OCI-LY7 (cell line): ENCODE measurements at regions of chr16 and their contacts with region 1.

Region 1: DNA sequence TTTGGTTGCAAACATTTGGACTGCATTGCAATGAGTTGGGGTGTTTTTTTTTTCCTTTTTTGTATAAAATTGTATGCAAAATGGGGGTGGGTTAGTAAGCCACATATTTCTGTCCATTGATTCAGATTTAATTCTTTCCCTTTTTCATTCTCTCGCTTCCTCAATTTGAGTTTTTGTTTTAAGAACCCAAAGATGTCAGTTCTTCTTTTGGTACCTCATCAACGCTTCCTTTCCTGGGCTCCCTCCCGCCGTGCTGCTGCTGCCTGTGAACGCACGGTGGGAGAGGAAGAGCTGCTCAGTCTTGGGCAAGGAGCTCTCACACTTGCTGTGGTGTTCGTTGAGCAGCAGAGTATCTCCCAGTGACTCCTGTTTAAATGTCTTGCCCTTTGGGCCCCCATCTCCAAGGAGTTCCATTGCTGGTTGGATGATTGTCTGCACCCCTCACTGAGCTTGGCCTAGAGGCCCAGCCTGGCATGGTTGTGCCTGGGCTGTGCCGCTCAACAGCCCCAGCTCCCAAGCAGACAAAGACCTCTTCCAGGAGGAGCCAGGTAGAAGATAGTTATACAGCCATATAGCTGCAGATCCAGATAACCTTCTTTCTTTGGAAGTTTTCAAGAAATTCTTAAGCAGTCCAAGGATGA is 13.6 kb downstream of the UBFD1 start:
- DNase-seq: peak; percentile 82
- H3K4me3 ChIP-seq: peak overlapping the region; percentile 44
- H3K27ac ChIP-seq: peak overlapping the region; percentile 79
- H3K4me1 ChIP-seq: peaks cover 36% of the 10 kb centered on the region
- CTCF ChIP-seq: no peak

Region 2: DNA sequence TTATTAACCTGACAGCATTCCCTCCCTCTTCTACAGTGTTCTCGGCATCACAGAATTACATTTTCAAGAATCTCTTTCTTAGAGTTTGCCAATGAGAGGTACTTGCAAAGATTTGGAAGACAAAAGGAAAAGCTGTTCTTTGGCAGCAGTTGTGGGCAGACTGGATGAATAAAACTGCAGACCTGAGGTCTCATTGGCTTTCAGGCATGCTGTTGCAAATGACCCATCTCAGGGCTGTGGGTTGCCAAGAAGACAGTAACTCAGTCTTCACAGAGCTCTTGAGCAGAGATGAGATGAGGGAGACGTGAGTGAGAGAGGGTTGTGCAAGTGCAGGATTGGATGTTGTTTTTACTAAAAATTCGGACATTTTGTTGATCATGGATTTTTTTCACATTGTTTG is 410.5 kb before region 1 on chr16:
- CTCF ChIA-PET with region 1: no interaction called
- POLR2A ChIA-PET with region 1: no interaction called
- intact Hi-C with region 1: no loop called
- DNase-seq: no peak
- H3K4me3 ChIP-seq: no peak overlapping the region
- H3K27ac ChIP-seq: no peak overlapping the region
- H3K4me1 ChIP-seq: peaks cover 21% of the 10 kb centered on the region
- CTCF ChIP-seq: no peak

Region 3: GRCh38 chr16:23607726-23608125 is 36.6 kb after region 1 on chr16:
- CTCF ChIA-PET with region 1: no interaction called
- POLR2A ChIA-PET with region 1: interaction called, 10 read pairs
- intact Hi-C with region 1: no loop called
- DNase-seq: no peak
- H3K4me3 ChIP-seq: no peak overlapping the region
- H3K27ac ChIP-seq: no peak overlapping the region
- H3K4me1 ChIP-seq: no peaks in the 10 kb centered on the region
- CTCF ChIP-seq: no peak

Region 4: DNA sequence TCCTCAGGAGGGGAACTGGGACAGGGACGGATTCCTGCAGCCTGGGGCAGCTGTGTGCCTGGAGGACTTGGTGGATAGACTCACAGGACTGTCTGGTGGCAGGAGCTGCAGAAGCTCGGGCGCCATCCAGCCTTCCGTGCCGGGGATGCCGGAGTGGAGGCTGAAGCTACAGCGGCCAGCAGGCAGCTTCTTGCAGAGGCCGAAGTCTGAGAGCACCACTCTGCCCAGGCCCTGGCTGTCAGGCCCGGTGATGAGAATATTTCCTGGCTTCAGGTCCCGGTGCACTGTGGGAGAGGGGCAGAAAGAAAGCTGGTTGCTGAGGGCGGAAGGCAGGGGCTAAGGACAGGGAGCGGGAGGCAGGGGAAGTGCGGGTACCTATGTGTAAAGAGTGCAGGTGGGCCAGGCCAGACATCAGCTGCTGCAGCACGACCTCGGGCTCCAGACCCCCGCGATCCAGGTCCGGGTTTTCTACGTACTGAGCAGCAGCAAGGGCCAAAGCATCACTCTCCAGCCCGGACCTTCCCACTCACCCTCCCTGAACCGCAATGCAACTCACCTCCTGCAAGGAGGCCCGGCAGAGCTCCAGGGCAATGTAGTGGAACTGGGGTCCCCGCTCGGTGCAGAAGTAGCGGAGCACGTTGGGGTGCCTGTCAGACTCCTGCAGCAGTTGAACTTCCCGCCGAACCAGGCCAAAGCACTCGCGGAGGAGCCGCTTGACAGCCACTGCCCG is 123.7 kb after region 1 on chr16:
- CTCF ChIA-PET with region 1: no interaction called
- POLR2A ChIA-PET with region 1: no interaction called
- intact Hi-C with region 1: no loop called
- DNase-seq: peak; percentile 86
- H3K4me3 ChIP-seq: peak overlapping the region; percentile 70
- H3K27ac ChIP-seq: peak overlapping the region; percentile 46
- H3K4me1 ChIP-seq: peaks cover 14% of the 10 kb centered on the region
- CTCF ChIP-seq: no peak

Region 5: GRCh38 chr16:24291932-24292331 is 720.8 kb after region 1 on chr16:
- CTCF ChIA-PET with region 1: no interaction called
- POLR2A ChIA-PET with region 1: no interaction called
- intact Hi-C with region 1: no loop called
- DNase-seq: no peak
- H3K4me3 ChIP-seq: no peak overlapping the region
- H3K27ac ChIP-seq: no peak overlapping the region
- H3K4me1 ChIP-seq: no peaks in the 10 kb centered on the region
- CTCF ChIP-seq: no peak

Region 6: GRCh38 chr16:25434064-25434463 is 1863.0 kb after region 1 on chr16:
- CTCF ChIA-PET with region 1: no interaction called
- POLR2A ChIA-PET with region 1: no interaction called
- intact Hi-C with region 1: no loop called
- DNase-seq: no peak
- H3K4me3 ChIP-seq: no peak overlapping the region
- H3K27ac ChIP-seq: no peak overlapping the region
- H3K4me1 ChIP-seq: no peaks in the 10 kb centered on the region
- CTCF ChIP-seq: no peak